Activated CD4-positive, alpha-beta memory T cell treated with anti-CD3 and anti-CD28 coated beads, Interleukin-2, amount 10 ng/mL, durations not matched to agents 7 days and 5 days (primary cell): ENCODE measurements at regions of chr14 and their contacts with region 1.

Region 1: DNA sequence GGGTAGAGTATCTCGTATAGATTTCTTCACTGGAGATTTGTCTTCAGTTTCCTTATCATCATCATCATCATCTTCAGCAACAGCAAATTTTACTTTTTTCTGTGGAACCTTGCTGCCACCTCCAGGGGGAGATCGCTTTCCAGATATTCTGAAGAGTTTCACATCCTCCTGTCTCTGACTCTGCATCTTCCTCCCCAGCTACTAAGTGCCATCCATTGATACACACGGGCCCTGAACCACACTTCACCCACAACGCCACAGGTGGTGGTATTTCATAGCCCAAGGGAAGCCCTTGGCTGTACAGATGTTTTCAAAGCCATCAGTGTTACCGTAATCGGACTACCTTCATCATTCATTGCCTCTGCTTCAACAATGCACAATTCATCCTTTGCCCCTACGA is 82.2 kb downstream of the PPP2R5C start:
- DNase-seq: peak; percentile 70
- H3K4me3 Mint-ChIP-seq: no peak overlapping the region
- H3K27ac Mint-ChIP-seq: peak overlapping the region; percentile 37
- H3K4me1 Mint-ChIP-seq: peaks cover 88% of the 10 kb centered on the region
- H3K27me3 Mint-ChIP-seq: no peaks in the 10 kb centered on the region

Region 2: GRCh38 chr14:101731187-101732080 is 112.2 kb before region 1 on chr14:
- CTCF ChIA-PET with region 1: no interaction called
- POLR2A ChIA-PET with region 1: no interaction called
- DNase-seq: peak; percentile 85
- H3K4me3 Mint-ChIP-seq: peak overlapping the region; percentile 70
- H3K27ac Mint-ChIP-seq: peak overlapping the region; percentile 96
- H3K4me1 Mint-ChIP-seq: peaks cover 48% of the 10 kb centered on the region
- H3K27me3 Mint-ChIP-seq: no peaks in the 10 kb centered on the region

Region 3: DNA sequence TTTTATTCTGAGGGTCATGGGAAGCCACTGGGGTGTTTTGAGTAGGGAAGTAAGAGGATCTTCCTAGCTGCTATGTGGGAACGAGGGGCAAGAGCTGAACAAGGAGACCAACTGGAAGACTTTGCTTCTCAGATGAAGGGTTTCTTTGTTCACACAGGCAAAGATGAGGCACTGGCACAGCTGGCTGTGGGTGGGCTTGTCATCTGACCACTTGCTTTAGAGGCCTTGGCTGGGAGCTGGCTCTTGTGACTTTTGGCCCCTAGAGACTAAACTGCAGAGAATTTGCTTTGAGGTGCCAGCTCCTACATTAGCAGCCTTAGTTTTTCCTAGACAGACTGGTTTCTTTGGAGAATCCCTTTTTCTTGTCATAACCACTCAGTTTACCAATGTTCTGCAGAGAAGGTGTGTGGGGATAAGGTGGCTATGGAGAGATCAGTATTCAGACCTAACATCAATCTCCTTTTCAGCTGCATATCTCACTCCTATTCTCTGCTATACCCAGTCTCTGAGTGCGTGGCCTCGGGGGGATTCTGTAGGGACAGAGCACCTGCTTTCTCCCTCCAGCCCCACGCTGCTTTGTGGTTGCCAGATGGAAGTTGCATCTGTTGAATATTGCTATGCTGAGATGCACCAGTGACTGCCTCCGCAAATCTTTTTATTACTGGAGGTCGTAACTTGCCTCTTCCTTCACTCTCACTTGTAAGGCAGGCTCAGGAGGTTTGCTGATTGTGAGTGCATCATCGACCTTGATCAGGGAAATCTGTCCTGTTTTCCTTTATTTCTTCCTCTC is 69.5 kb before region 1 on chr14:
- CTCF ChIA-PET with region 1: interaction called, 33 read pairs
- POLR2A ChIA-PET with region 1: interaction called, 12 read pairs
- DNase-seq: no peak
- H3K4me3 Mint-ChIP-seq: no peak overlapping the region
- H3K27ac Mint-ChIP-seq: no peak overlapping the region
- H3K4me1 Mint-ChIP-seq: peaks cover 10% of the 10 kb centered on the region
- H3K27me3 Mint-ChIP-seq: peaks cover 3% of the 10 kb centered on the region

Region 4: DNA sequence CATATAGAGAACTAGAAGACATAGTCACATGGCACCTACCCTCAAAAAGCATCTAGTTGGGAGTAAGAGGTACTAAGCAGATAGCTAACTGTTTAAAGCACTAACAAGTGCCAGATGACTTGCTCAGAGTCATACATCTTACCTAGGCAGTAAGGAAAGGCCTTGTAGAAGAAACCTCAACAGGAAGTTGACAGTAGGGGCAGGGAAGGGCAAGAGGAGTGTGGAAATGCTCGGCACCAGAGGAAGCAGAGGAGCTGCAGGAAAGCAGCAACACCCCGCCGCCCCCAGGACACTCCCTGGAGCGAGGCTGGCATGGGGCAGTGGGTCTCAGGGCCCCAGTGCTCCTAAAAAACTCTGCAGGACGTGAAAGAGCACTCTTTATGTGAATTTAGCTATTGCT is 10.7 kb after region 1 on chr14:
- CTCF ChIA-PET with region 1: interaction called, 9 read pairs
- POLR2A ChIA-PET with region 1: interaction called, 13 read pairs
- DNase-seq: no peak
- H3K4me3 Mint-ChIP-seq: no peak overlapping the region
- H3K27ac Mint-ChIP-seq: peak overlapping the region; percentile 22
- H3K4me1 Mint-ChIP-seq: peaks cover 74% of the 10 kb centered on the region
- H3K27me3 Mint-ChIP-seq: no peaks in the 10 kb centered on the region

Region 5: GRCh38 chr14:101965770-101966718 is 122.4 kb after region 1 on chr14:
- CTCF ChIA-PET with region 1: no interaction called
- POLR2A ChIA-PET with region 1: no interaction called
- DNase-seq: no peak
- H3K4me3 Mint-ChIP-seq: peak overlapping the region; percentile 90
- H3K27ac Mint-ChIP-seq: peak overlapping the region; percentile 85
- H3K4me1 Mint-ChIP-seq: peaks cover 44% of the 10 kb centered on the region
- H3K27me3 Mint-ChIP-seq: peaks cover 4% of the 10 kb centered on the region

Region 6: GRCh38 chr14:101980251-101981099 is 136.8 kb after region 1 on chr14:
- CTCF ChIA-PET with region 1: no interaction called
- POLR2A ChIA-PET with region 1: no interaction called
- DNase-seq: no peak
- H3K4me3 Mint-ChIP-seq: no peak overlapping the region
- H3K27ac Mint-ChIP-seq: no peak overlapping the region
- H3K4me1 Mint-ChIP-seq: peaks cover 2% of the 10 kb centered on the region
- H3K27me3 Mint-ChIP-seq: no peaks in the 10 kb centered on the region

Region 7: GRCh38 chr14:102390064-102390855 is 546.6 kb after region 1 on chr14:
- CTCF ChIA-PET with region 1: no interaction called
- POLR2A ChIA-PET with region 1: no interaction called
- DNase-seq: no peak
- H3K4me3 Mint-ChIP-seq: no peak overlapping the region
- H3K27ac Mint-ChIP-seq: no peak overlapping the region
- H3K4me1 Mint-ChIP-seq: peaks cover 5% of the 10 kb centered on the region
- H3K27me3 Mint-ChIP-seq: no peaks in the 10 kb centered on the region